AG04450 (cell line): ENCODE measurements at regions of chr2 and their contacts with region 1.

Region 1: GRCh38 chr2:142989273-142990204 is 112.1 kb downstream of the KYNU start:
- DNase-seq: no peak
- H3K4me3 ChIP-seq: no peak overlapping the region
- H3K27ac ChIP-seq: no peak overlapping the region
- H3K27me3 ChIP-seq: no peaks in the 10 kb centered on the region
- CTCF ChIP-seq: peak; percentile 55

Region 2: GRCh38 chr2:142974288-142975024 is 15.1 kb before region 1 on chr2:
- CTCF ChIA-PET with region 1: interaction called, 16 read pairs
- POLR2A ChIA-PET with region 1: no interaction called
- DNase-seq: no peak
- H3K4me3 ChIP-seq: no peak overlapping the region
- H3K27ac ChIP-seq: peak overlapping the region; percentile 25
- H3K27me3 ChIP-seq: no peaks in the 10 kb centered on the region
- CTCF ChIP-seq: no peak